IMR-90 (cell line): ENCODE measurements at regions of chr13 and their contacts with region 1.

Region 1: GRCh38 chr13:45092663-45093062 is 27.6 kb upstream of the GTF2F2 start:
- DNase-seq: no peak
- ATAC-seq: no peak
- H3K4me3 ChIP-seq: no peak overlapping the region
- H3K27ac ChIP-seq: no peak overlapping the region
- H3K4me1 ChIP-seq: no peaks in the 10 kb centered on the region
- H3K27me3 ChIP-seq: no peaks in the 10 kb centered on the region
- CTCF ChIP-seq: no peak
- POLR2A ChIP-seq: no peak
- RAD21 ChIP-seq: no peak

Region 2: GRCh38 chr13:44978328-44978727 is 114.3 kb before region 1 on chr13:
- CTCF ChIA-PET with region 1: no interaction called
- POLR2A ChIA-PET with region 1: no interaction called
- dilution Hi-C with region 1: no loop called
- in situ Hi-C with region 1: no loop called
- intact Hi-C with region 1: no loop called
- DNase-seq: no peak
- ATAC-seq: peak; percentile 60
- H3K4me3 ChIP-seq: no peak overlapping the region
- H3K27ac ChIP-seq: no peak overlapping the region
- H3K4me1 ChIP-seq: peaks cover 3% of the 10 kb centered on the region; the same call in 1 of the 2 replicates
- H3K27me3 ChIP-seq: no peaks in the 10 kb centered on the region
- CTCF ChIP-seq: no peak; the same call in 1 of the 2 replicates
- POLR2A ChIP-seq: no peak
- RAD21 ChIP-seq: no peak

Region 3: GRCh38 chr13:45269204-45269603 is 176.5 kb after region 1 on chr13:
- CTCF ChIA-PET with region 1: no interaction called
- POLR2A ChIA-PET with region 1: interaction called, 15 read pairs
- dilution Hi-C with region 1: no loop called
- in situ Hi-C with region 1: no loop called
- intact Hi-C with region 1: no loop called
- DNase-seq: peak; percentile 20
- ATAC-seq: no peak; the same call in 1 of the 2 replicates
- H3K4me3 ChIP-seq: no peak overlapping the region
- H3K27ac ChIP-seq: no peak overlapping the region
- H3K4me1 ChIP-seq: no peaks in the 10 kb centered on the region; the same call in 1 of the 2 replicates
- H3K27me3 ChIP-seq: no peaks in the 10 kb centered on the region
- CTCF ChIP-seq: no peak
- POLR2A ChIP-seq: no peak
- RAD21 ChIP-seq: no peak